Left ventricle myocardium inferior (tissue), 1 donor: ENCODE measurements at regions of chr4 and their contacts with region 1.

Region 1: DNA sequence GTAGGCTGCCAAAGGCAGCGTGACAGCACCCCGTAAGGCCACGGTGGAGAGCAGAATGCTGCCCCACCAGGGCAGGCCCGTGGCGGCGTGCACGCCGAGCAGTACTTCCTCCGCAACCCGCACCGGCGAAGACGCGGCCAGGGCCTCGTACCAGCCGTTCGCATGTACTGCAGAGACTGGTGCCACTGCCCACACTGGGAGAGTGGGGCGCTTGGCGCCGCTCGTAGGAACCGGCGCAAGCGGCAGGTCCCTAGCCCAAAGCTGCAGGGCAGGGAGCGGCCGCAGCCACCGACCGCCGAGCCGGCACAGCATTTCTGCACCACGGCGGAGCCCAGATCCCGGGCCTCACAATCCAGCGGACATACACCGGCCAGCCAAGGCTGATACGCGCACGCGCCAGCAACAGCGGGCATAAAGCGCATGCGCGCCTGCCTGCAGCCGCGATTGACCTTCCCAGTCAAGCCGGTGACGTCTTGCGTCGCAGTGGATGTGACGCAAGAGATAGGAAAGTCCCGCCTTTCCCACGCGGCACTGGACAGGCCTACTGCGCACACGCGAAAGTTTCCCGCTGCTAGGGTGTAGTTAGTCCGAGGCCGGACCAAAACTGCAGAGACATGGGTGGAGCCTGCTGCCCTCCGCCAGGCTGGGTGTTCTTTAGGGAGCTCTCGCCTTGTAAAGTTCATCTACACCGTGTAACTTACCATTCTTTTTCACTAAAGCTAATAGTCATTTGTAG is at the start of gene COX18:
- DNase-seq: peak; percentile 98
- H3K4me3 ChIP-seq: peak within 1 kb of the TSS; percentile 91
- H3K27ac ChIP-seq: peak within 1 kb of the TSS; percentile 99
- H3K4me1 ChIP-seq: peaks cover 52% of the 10 kb centered on the region
- H3K27me3 ChIP-seq: no peaks in the 10 kb centered on the region
- CTCF ChIP-seq: no peak
- total RNA-seq, gene COX18: 17.0 TPM

Region 2: GRCh38 chr4:72797486-72797885 is 272.0 kb before region 1 on chr4:
- intact Hi-C with region 1: no loop called
- DNase-seq: no peak
- H3K4me3 ChIP-seq: no peak overlapping the region
- H3K27ac ChIP-seq: no peak overlapping the region
- H3K4me1 ChIP-seq: no peaks in the 10 kb centered on the region
- H3K27me3 ChIP-seq: no peaks in the 10 kb centered on the region
- CTCF ChIP-seq: no peak

Region 3: GRCh38 chr4:73258686-73259570 is 189.4 kb after region 1 on chr4 and contains the start of gene ANKRD17:
- intact Hi-C with region 1: loop called (anchors 5 kb)
- DNase-seq: peak; percentile 92
- H3K4me3 ChIP-seq: peak within 1 kb of the TSS; percentile 94
- H3K27ac ChIP-seq: peak within 1 kb of the TSS; percentile 99
- H3K4me1 ChIP-seq: peaks cover 78% of the 10 kb centered on the region
- H3K27me3 ChIP-seq: no peaks in the 10 kb centered on the region
- CTCF ChIP-seq: peak; percentile 42
- total RNA-seq, gene ANKRD17: 54.1 TPM